Psoas muscle (tissue), 8 donors: ENCODE measurements at regions of chr12 and their contacts with region 1.

Region 1: GRCh38 chr12:11705010-11705409 is 55.5 kb downstream of the ETV6 start:
- DNase-seq: no peak
- ATAC-seq: peak; percentile 39 to 67 (median 42)
- H3K4me3 ChIP-seq: no peak overlapping the region
- H3K27ac ChIP-seq: peak overlapping the region; percentile 15
- H3K4me1 ChIP-seq: peaks cover 39% of the 10 kb centered on the region
- H3K27me3 ChIP-seq: no peaks in the 10 kb centered on the region
- CTCF ChIP-seq: no peak

Region 2: GRCh38 chr12:11621797-11622423 is 83.1 kb before region 1 on chr12:
- intact Hi-C with region 1: no loop called
- DNase-seq: no peak
- ATAC-seq: peak in 1 of 4 donors; percentile 62
- H3K4me3 ChIP-seq: no peak overlapping the region
- H3K27ac ChIP-seq: no peak overlapping the region
- H3K4me1 ChIP-seq: no peaks in the 10 kb centered on the region
- H3K27me3 ChIP-seq: no peaks in the 10 kb centered on the region
- CTCF ChIP-seq: peak; percentile 35

Region 3: GRCh38 chr12:11668605-11669004 is 36.4 kb before region 1 on chr12:
- intact Hi-C with region 1: loop called in 1 of 2 experiments (anchors 5 kb)
- DNase-seq: no peak
- ATAC-seq: no peak
- H3K4me3 ChIP-seq: no peak overlapping the region
- H3K27ac ChIP-seq: no peak overlapping the region
- H3K4me1 ChIP-seq: peaks cover 39% of the 10 kb centered on the region
- H3K27me3 ChIP-seq: no peaks in the 10 kb centered on the region
- CTCF ChIP-seq: no peak

Region 4: DNA sequence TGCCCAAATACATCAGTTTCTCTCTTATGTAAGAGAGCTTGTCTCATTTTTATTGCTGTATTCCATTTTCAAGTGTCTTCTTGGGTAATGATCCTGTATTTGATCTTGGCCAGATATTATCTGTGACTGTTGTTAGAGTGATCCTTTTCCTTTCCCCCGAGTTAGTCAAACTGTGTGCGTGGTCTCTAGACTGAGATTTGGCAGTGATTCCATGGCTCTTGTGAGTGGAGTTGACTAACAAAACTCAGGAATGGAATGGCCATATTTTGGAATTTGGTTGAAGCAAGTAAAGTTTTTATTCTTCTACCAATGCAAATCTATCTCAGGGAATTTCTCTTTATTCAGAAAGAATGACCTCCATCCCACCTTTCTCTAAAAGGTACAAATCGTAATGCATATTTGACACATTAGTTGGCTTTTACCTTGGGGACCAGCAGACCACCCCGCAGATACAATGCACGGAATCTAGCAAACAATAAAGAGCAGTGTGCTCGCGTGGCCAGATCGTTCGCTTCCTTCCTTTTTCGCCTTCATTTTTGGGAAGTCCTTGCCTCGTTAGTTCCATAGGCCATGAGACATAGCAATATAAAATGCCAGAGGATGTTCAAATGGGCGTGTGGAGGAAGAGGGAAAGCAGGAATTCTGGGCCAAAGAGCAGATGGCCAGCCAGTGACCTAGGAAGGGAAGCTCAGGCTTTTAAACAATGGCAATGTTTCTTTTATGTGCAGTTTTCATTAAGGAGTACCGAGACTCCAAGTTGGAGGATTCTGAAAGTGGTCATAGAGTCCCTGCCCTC is 31.1 kb before region 1 on chr12:
- intact Hi-C with region 1: loop called (anchors 2 to 5 kb)
- DNase-seq: no peak
- ATAC-seq: no peak
- H3K4me3 ChIP-seq: no peak overlapping the region
- H3K27ac ChIP-seq: no peak overlapping the region
- H3K4me1 ChIP-seq: peaks cover 44% of the 10 kb centered on the region
- H3K27me3 ChIP-seq: no peaks in the 10 kb centered on the region
- CTCF ChIP-seq: no peak